ENCODE measurements at regions of chr13 and their contacts with region 1.

Region 1: DNA sequence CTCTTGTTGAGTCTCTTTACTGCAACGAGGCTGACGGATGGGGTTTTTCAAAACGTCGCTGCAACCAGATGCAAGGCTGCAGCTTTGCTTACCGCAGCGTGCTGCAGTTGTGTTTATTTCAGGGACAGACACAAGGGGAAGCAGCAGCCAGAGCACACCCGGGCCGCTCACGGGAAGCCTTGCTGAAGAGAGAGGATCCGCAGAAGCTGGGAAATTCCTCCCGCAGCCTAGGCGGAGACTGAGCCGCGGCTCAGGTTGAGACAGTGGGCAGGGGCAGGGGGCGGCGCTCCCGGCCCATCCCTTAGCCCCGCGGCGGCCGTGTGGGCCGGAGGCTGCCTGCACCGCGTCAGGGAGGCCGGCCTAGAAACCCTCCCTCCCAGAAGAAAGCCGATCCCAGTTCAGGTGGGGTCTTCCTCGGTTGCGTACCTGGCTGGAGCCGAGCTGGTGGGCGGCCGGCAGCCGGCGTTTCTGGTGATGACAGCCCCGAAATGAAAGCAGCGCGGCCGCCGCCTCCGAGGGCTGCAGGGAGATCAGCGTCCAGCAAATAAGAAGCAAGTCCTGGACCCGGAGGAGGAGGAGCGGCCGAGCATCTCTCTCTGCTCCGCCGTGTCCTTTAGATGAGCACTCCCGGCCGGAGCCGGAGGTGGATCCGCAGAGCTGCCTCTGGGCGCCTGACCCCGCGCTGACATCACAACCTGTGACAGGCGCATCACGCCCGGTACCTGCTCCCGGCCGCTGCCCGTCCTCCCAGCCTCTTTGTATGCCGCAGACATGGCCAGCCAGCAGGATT is at the start of gene FRY:
- DNase-seq: peak; percentile 55
- H3K4me3 ChIP-seq: peak within 1 kb of the TSS; percentile 59 to 88 (median 76)
- H3K27ac ChIP-seq: no peak within 1 kb of the TSS
- H3K4me1 ChIP-seq: peaks cover 12% of the 10 kb centered on the region
- H3K27me3 ChIP-seq: no peaks in the 10 kb centered on the region
- CTCF ChIP-seq: peak in 1 of 2 donors; percentile 18
- POLR2A ChIP-seq: no peak
- total RNA-seq, gene FRY: 75.8 and 86.7 TPM in 2 replicates

Region 2: DNA sequence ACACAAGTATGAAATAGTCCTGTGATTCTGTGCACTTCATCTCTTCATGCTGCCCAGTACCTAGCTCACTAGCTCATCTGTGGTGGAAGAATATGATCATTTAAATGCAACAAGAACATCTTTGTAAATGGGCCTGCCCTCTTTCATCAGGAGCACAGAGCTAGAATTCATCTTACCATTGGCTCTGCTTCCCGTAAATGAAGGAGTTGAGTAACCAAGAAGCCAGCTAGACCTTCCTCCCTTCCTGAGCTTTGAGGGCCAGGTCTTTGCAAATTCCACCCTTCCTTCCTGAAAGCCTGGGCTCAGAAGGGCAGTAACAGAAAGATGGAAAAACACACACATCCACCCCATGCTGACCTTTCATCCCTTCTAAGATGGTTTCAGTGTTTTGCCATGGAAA is 82.3 kb after region 1 on chr13:
- CTCF ChIA-PET with region 1: no interaction called
- POLR2A ChIA-PET with region 1: no interaction called
- dilution Hi-C with region 1: no loop called
- intact Hi-C with region 1: loop called (anchors 5 kb)
- DNase-seq: peak; percentile 52
- H3K4me3 ChIP-seq: no peak overlapping the region
- H3K27ac ChIP-seq: no peak overlapping the region
- H3K4me1 ChIP-seq: peaks cover 8% of the 10 kb centered on the region
- H3K27me3 ChIP-seq: no peaks in the 10 kb centered on the region
- CTCF ChIP-seq: no peak
- POLR2A ChIP-seq: no peak

Region 3: GRCh38 chr13:32142956-32143375 is 111.7 kb after region 1 on chr13:
- CTCF ChIA-PET with region 1: no interaction called
- POLR2A ChIA-PET with region 1: no interaction called
- dilution Hi-C with region 1: no loop called
- intact Hi-C with region 1: loop called (anchors 5 kb)
- DNase-seq: peak; percentile 95
- H3K4me3 ChIP-seq: no peak overlapping the region
- H3K27ac ChIP-seq: peak overlapping the region; percentile 22
- H3K4me1 ChIP-seq: peaks cover 26% of the 10 kb centered on the region
- H3K27me3 ChIP-seq: no peaks in the 10 kb centered on the region
- CTCF ChIP-seq: no peak
- POLR2A ChIP-seq: peak; percentile 47

Region 4: GRCh38 chr13:32164622-32165268 is 133.5 kb after region 1 on chr13:
- CTCF ChIA-PET with region 1: interaction called, 13 read pairs
- POLR2A ChIA-PET with region 1: no interaction called
- dilution Hi-C with region 1: no loop called
- intact Hi-C with region 1: no loop called
- DNase-seq: peak; percentile 51
- H3K4me3 ChIP-seq: no peak overlapping the region
- H3K27ac ChIP-seq: no peak overlapping the region
- H3K4me1 ChIP-seq: no peaks in the 10 kb centered on the region
- H3K27me3 ChIP-seq: no peaks in the 10 kb centered on the region
- CTCF ChIP-seq: peak; percentile 65 to 66
- POLR2A ChIP-seq: no peak

Region 5: DNA sequence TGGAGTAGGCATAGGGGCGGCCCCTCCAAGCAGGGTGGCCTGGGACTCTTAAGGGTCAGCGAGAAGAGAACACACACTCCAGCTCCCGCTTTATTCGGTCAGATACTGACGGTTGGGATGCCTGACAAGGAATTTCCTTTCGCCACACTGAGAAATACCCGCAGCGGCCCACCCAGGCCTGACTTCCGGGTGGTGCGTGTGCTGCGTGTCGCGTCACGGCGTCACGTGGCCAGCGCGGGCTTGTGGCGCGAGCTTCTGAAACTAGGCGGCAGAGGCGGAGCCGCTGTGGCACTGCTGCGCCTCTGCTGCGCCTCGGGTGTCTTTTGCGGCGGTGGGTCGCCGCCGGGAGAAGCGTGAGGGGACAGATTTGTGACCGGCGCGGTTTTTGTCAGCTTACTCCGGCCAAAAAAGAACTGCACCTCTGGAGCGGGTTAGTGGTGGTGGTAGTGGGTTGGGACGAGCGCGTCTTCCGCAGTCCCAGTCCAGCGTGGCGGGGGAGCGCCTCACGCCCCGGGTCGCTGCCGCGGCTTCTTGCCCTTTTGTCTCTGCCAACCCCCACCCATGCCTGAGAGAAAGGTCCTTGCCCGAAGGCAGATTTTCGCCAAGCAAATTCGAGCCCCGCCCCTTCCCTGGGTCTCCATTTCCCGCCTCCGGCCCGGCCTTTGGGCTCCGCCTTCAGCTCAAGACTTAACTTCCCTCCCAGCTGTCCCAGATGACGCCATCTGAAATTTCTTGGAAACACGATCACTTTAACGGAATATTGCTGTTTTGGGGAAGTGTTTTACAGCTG is 284.2 kb after region 1 on chr13 and contains the starts of genes BRCA2 and ZAR1L:
- CTCF ChIA-PET with region 1: no interaction called
- POLR2A ChIA-PET with region 1: interaction called, 3 read pairs
- dilution Hi-C with region 1: no loop called
- intact Hi-C with region 1: loop called (anchors 5 kb)
- DNase-seq: peak; percentile 86
- H3K4me3 ChIP-seq: peak within 1 kb of the TSS; percentile 37 to 96 (median 56)
- H3K27ac ChIP-seq: peak within 1 kb of the TSS; percentile 88
- H3K4me1 ChIP-seq: peaks cover 14% of the 10 kb centered on the region
- H3K27me3 ChIP-seq: no peaks in the 10 kb centered on the region
- CTCF ChIP-seq: no peak
- POLR2A ChIP-seq: peak; percentile 53
- total RNA-seq, gene BRCA2: 16.1 and 17.5 TPM in 2 replicates
- total RNA-seq, gene ZAR1L: not detected in 2 replicates

Measured in endothelial cell of umbilical vein (primary cell).